PC-3 (cell line): ENCODE measurements at regions of chr21 and their contacts with region 1.

Region 1: GRCh38 chr21:31354604-31355443 is 10.8 kb upstream of the TIAM1 start:
- DNase-seq: peak; percentile 99
- ATAC-seq: peak; percentile 75
- H3K4me3 ChIP-seq: no peak overlapping the region; the same call in 1 of the 2 replicates
- H3K27ac ChIP-seq: peak overlapping the region; percentile 94
- H3K4me1 ChIP-seq: peaks cover 49% of the 10 kb centered on the region
- H3K27me3 ChIP-seq: no peaks in the 10 kb centered on the region
- CTCF ChIP-seq: no peak

Region 2: GRCh38 chr21:31218830-31219608 is 135.8 kb before region 1 on chr21:
- CTCF ChIA-PET with region 1: no interaction called
- POLR2A ChIA-PET with region 1: no interaction called
- intact Hi-C with region 1: loop called (anchors 1 kb)
- DNase-seq: peak; percentile 97
- ATAC-seq: peak; percentile 87
- H3K4me3 ChIP-seq: peak overlapping the region; percentile 57
- H3K27ac ChIP-seq: peak overlapping the region; percentile 90
- H3K4me1 ChIP-seq: peaks cover 40% of the 10 kb centered on the region
- H3K27me3 ChIP-seq: no peaks in the 10 kb centered on the region
- CTCF ChIP-seq: no peak

Region 3: GRCh38 chr21:31366825-31367224 is 12.0 kb after region 1 on chr21:
- CTCF ChIA-PET with region 1: interaction called, 5 read pairs
- POLR2A ChIA-PET with region 1: interaction called, 13 read pairs
- intact Hi-C with region 1: loop called (anchors 1 kb)
- DNase-seq: peak; percentile 98
- ATAC-seq: peak; percentile 96
- H3K4me3 ChIP-seq: no peak overlapping the region
- H3K27ac ChIP-seq: 0 out of 2 replicates have a peak overlapping the region, but pooled peaks have one; percentile 29
- H3K4me1 ChIP-seq: peaks cover 20% of the 10 kb centered on the region
- H3K27me3 ChIP-seq: no peaks in the 10 kb centered on the region
- CTCF ChIP-seq: no peak

Region 4: GRCh38 chr21:31498981-31499380 is 144.2 kb after region 1 on chr21:
- CTCF ChIA-PET with region 1: no interaction called
- POLR2A ChIA-PET with region 1: no interaction called
- intact Hi-C with region 1: no loop called
- DNase-seq: no peak
- ATAC-seq: peak; percentile 70
- H3K4me3 ChIP-seq: no peak overlapping the region
- H3K27ac ChIP-seq: no peak overlapping the region
- H3K4me1 ChIP-seq: peaks cover 19% of the 10 kb centered on the region
- H3K27me3 ChIP-seq: no peaks in the 10 kb centered on the region
- CTCF ChIP-seq: 0 out of 2 replicates have a peak, but pooled peaks have one; percentile 20

Region 5: DNA sequence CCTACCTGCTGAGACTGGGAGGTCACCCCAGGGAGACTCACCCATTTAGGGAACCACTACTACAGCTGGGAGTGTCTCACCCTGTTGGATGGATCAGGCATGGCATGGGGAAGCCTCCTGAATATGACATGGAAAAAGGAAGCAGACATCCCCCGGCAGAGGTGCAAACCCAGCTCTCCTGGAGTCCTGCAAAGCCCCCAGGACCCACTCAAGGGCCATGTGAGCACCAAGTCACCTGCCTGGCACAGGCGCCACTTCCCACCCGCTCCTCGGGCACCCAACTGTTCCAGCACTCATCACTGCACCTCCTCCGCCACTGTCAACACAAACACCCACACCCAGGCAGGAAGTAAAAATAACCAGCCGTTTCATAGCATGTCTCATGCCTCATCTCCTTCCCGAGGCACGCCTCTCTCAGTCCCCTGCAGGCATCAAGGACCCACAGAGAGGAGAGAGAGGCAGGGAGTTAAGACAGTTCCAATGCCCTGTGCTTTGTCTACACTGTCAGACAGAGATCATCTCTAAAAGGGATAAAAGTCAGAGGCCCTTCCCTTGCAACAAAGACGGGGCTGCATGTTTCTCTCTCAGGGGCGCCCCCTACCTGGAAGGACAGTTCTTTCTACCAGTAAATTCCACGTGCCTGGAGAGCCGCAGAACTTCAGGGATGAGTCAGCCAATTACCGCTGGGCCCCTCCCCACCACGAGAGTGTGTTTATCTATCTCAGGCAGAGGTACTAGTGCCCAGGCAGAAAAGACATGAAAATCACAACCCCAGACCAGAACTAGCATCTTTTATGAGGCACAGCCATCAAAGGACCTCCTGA is 154.6 kb after region 1 on chr21:
- CTCF ChIA-PET with region 1: no interaction called
- POLR2A ChIA-PET with region 1: interaction called, 6 read pairs
- intact Hi-C with region 1: loop called (anchors 5 kb)
- DNase-seq: peak; percentile 81
- ATAC-seq: peak; percentile 89
- H3K4me3 ChIP-seq: peak overlapping the region; percentile 28; the same call in 1 of the 2 replicates
- H3K27ac ChIP-seq: peak overlapping the region; percentile 75
- H3K4me1 ChIP-seq: peaks cover 15% of the 10 kb centered on the region
- H3K27me3 ChIP-seq: no peaks in the 10 kb centered on the region
- CTCF ChIP-seq: peak; percentile 86

Region 6: GRCh38 chr21:31604591-31605190 is 249.9 kb after region 1 on chr21:
- CTCF ChIA-PET with region 1: no interaction called
- POLR2A ChIA-PET with region 1: no interaction called
- intact Hi-C with region 1: loop called (anchors 1 kb)
- DNase-seq: peak; percentile 87
- ATAC-seq: peak; percentile 91
- H3K4me3 ChIP-seq: no peak overlapping the region
- H3K27ac ChIP-seq: no peak overlapping the region
- H3K4me1 ChIP-seq: peaks cover 11% of the 10 kb centered on the region
- H3K27me3 ChIP-seq: no peaks in the 10 kb centered on the region
- CTCF ChIP-seq: peak; percentile 94